Activated CD4-positive, alpha-beta T cell treated with anti-CD3 and anti-CD28 coated beads, Interleukin-2, amount 10 ng/mL, durations not matched to agents 24 days and 14 days (primary cell): ENCODE measurements at regions of chr12 and their contacts with region 1.

Region 1: GRCh38 chr12:54522243-54522642 is 24.7 kb downstream of the NCKAP1L start:
- DNase-seq: no peak
- H3K4me3 Mint-ChIP-seq: no peak overlapping the region
- H3K27ac Mint-ChIP-seq: peak overlapping the region; percentile 93
- H3K4me1 Mint-ChIP-seq: peaks cover 20% of the 10 kb centered on the region
- H3K27me3 Mint-ChIP-seq: no peaks in the 10 kb centered on the region

Region 2: DNA sequence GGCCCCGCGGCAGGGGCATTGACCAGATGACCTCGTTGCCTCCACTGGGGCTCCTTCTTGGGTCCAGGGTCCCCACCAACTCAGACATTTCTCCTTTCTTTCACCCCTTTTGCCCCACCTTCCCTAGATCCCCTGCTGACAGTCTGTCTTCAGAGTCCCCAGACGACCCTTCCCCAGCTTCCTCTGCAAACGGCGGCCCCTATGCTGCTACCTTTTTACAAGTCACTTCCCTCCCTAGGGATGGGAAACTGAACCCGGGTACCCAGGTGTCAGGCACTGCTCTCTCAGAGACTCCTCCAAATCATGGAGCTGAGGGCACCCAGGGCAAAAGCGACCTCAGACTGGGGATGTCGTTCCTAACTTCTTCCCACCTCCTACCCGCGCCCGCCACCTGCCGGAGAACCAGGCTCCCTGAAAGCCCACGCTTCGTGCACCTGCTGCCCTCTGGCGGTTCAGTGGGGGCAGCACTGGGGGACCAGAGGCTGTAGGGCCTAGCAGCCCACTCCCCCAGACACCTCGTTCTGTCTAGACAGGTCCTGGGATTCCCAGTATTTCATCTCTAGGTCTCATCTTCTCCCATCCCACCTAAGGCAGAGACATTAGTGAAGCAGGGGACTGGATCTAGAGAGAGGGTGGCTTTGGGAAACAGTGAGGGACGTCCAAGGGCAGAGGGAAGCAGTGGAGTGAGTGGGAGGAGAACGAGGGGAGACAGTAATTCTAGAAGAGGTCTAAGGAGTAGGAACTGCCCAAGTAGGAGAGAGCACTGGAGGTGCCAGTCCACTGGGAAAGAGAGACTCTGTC is 142.6 kb before region 1 on chr12:
- intact Hi-C with region 1: no loop called
- DNase-seq: peak; percentile 97
- H3K4me3 Mint-ChIP-seq: peak overlapping the region; percentile 75
- H3K27ac Mint-ChIP-seq: peak overlapping the region; percentile 34
- H3K4me1 Mint-ChIP-seq: peaks cover 20% of the 10 kb centered on the region
- H3K27me3 Mint-ChIP-seq: peaks cover 8% of the 10 kb centered on the region

Region 3: GRCh38 chr12:54463034-54463433 is 59.2 kb before region 1 on chr12:
- intact Hi-C with region 1: no loop called
- DNase-seq: no peak
- H3K4me3 Mint-ChIP-seq: no peak overlapping the region
- H3K27ac Mint-ChIP-seq: no peak overlapping the region
- H3K4me1 Mint-ChIP-seq: no peaks in the 10 kb centered on the region
- H3K27me3 Mint-ChIP-seq: peaks cover 51% of the 10 kb centered on the region

Region 4: GRCh38 chr12:54497883-54498282 is 24.4 kb before region 1 on chr12:
- intact Hi-C with region 1: loop called (anchors 1 kb)
- DNase-seq: no peak
- H3K4me3 Mint-ChIP-seq: peak overlapping the region; percentile 93
- H3K27ac Mint-ChIP-seq: peak overlapping the region; percentile 95
- H3K4me1 Mint-ChIP-seq: peaks cover 34% of the 10 kb centered on the region
- H3K27me3 Mint-ChIP-seq: no peaks in the 10 kb centered on the region

Region 5: GRCh38 chr12:55365086-55365485 is 842.8 kb after region 1 on chr12:
- intact Hi-C with region 1: no loop called
- DNase-seq: no peak
- H3K4me3 Mint-ChIP-seq: no peak overlapping the region
- H3K27ac Mint-ChIP-seq: no peak overlapping the region
- H3K4me1 Mint-ChIP-seq: no peaks in the 10 kb centered on the region
- H3K27me3 Mint-ChIP-seq: peaks cover 2% of the 10 kb centered on the region